Right ventricle myocardium inferior (tissue), 1 donor: ENCODE measurements at regions of chr17 and their contacts with region 1.

Region 1: DNA sequence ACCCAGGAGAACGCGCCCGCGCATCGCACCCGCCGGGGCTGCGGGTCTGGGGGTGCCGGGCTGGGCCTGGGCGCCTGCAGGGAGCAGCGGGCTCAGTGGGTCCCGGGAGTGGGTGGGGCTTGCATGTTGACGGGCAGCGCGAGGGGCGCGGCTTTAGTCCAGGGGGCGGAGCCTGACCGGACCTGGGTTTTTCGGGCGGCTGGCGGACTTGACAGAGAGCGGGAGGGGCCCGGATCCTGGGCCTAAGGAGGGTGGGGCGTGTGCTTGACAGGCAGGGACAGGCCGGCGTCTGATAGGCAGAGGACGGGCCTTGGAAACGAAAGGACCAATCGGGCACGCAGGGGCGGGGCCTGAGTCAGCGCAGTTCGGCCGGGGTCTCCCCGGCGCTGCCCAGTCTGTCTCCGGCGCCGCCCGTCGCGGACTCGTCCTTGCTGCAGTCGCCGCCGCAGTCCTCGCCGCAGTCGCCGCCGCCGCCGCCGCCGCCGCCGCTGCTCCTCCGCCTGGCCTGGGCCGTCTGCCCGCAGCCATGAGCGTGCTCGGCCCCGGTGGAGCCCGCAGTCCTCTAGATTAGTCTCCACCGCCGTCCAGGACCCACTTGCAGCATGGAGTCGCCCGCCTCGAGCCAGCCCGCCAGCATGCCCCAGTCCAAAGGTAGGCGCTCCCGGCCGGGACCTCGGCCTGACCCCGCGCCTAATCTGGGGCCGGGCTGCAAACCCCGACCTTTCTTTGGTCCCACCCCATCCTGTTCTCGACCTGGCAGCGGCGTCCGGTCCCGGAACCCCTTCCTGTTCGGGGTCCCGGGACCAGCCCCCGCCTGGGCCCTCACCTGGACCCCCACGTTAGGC is at the start of gene MAP2K3:
- DNase-seq: peak; percentile 100
- ATAC-seq: peak; percentile 89
- total RNA-seq, gene MAP2K3: 37.7 TPM

Region 2: DNA sequence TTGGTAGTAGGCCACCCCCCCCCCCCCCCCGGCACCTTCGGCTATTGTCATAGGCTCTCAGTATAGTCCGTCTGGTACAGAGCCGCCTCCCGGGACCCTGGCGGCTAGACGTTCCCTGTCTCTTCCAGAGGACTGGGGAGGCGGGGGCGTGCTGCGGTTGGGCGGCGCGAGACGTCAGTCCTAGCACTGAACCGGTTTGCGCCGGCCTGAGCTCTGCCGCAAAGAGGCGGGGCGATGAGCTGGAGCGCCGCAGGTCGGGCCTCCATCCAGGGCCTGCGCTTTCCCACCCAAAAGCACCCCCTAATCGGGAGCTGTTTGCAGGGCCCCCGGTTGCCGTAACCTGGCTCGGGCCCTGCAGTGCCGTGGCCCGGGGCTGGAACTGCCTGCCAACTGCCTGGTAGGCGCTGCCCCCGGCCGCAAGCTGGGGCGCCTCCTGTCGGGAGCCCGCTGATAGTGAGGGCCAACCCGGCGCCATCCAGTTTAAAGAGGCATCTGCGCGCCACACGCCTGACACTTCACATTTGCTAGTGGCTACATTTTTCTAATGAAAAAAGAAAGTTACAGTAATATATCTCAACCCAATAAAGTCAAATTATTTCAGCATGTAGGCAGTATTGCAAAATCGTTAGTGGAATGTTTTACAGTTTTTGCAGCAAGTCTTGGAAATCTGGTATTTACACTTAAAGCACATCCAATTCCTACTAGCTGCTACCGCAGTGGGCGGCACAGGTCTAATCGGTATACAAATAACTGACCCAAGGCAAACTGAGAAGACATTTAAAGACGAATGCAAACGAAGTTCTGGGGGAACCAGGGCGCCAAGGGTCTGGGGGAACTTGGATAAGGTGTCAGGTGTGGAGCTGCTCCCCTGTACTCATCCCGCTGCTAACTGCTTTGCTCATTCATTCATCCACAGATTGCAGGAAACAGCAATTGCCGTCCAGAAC is 241.0 kb before region 1 on chr17:
- intact Hi-C with region 1: loop called (anchors 5 kb)
- DNase-seq: peak; percentile 99
- ATAC-seq: peak; percentile 97

Region 3: GRCh38 chr17:21252796-21253645 is 31.5 kb before region 1 on chr17 and contains the start of gene NATD1:
- intact Hi-C with region 1: loop called (anchors 2 kb)
- DNase-seq: peak; percentile 97
- ATAC-seq: peak; percentile 78
- total RNA-seq, gene NATD1: 21.4 TPM

Region 4: GRCh38 chr17:21318439-21318838 is 33.9 kb after region 1 on chr17:
- intact Hi-C with region 1: loop called (anchors 5 kb)
- DNase-seq: peak; percentile 44
- ATAC-seq: no peak

Region 5: DNA sequence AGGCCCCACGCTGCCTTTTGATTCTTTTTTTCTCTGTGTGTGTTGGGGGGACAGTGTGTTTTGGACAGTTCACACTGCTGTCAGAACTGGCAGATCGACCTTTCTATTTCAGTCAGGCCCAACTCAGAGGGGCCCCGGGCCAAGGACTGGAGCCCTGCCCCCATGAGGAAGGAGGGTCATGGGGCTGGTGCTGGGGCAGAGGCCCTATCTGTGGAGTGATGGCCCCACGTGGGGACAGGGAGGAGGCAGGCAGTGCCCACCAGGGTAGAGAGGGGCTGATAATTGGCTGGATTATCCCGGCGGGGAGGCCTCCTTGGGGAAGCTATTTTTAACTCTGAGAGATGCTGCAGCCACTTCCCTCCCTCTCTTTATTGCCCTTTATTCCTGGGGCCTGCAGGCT is 85.9 kb after region 1 on chr17:
- intact Hi-C with region 1: loop called (anchors 5 kb)
- DNase-seq: peak; percentile 83
- ATAC-seq: peak; percentile 94

Region 6: GRCh38 chr17:21457051-21458026 is 172.8 kb after region 1 on chr17:
- intact Hi-C with region 1: loop called (anchors 5 kb)
- DNase-seq: peak; percentile 93
- ATAC-seq: peak; percentile 95